Naive thymus-derived CD4-positive, alpha-beta T cell (primary cell): ENCODE measurements at regions of chr14 and their contacts with region 1.

Region 1: DNA sequence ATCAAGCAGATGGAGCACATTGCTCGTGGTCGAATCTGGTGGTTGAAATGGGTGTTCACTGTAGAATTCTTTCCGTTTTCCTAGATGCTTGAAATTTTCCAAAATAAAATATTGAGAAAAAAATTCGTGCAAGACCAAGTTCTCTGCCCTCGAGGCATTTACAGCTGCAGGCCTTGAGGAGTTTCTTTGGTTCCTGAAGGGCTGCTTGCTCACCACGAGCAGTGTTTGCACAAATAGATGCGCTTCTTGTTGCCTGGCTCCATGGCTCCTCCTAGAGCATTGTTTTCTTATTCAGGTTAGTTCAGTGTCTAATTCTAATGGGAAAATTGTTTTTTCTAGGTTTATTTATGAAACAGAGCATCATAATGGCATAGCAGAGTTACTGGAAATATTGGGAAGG is 74.5 kb upstream of the DYNC1H1 start:
- DNase-seq: peak in 3 of 9 donors; percentile 12 to 26 (median 16)
- ATAC-seq: no peak
- H3K4me3 ChIP-seq: no peak overlapping the region
- H3K4me3 Mint-ChIP-seq: no peak overlapping the region
- H3K27ac ChIP-seq: no peak overlapping the region
- H3K27ac Mint-ChIP-seq: peak overlapping the region in 7 of 9 donors; percentile 7 to 68 (median 54)
- H3K4me1 ChIP-seq: no peaks in the 10 kb centered on the region
- H3K4me1 Mint-ChIP-seq: peaks cover 0 to 5% (median 0%) of the 10 kb centered on the region in 7 donors
- H3K27me3 ChIP-seq: no peaks in the 10 kb centered on the region
- H3K27me3 Mint-ChIP-seq: no peaks in the 10 kb centered on the region

Region 2: GRCh38 chr14:101774006-101774795 is 115.7 kb before region 1 on chr14:
- CTCF ChIA-PET with region 1: interaction called, 5 read pairs
- POLR2A ChIA-PET with region 1: no interaction called
- intact Hi-C with region 1: loop called in 1 of 2 experiments (anchors 5 kb)
- DNase-seq: no peak
- ATAC-seq: no peak
- H3K4me3 ChIP-seq: no peak overlapping the region
- H3K4me3 Mint-ChIP-seq: no peak overlapping the region
- H3K27ac ChIP-seq: no peak overlapping the region
- H3K27ac Mint-ChIP-seq: peak overlapping the region in 6 of 9 donors; percentile 14 to 70 (median 28)
- H3K4me1 ChIP-seq: no peaks in the 10 kb centered on the region
- H3K4me1 Mint-ChIP-seq: peaks cover 18 to 41% (median 35%) of the 10 kb centered on the region in 7 donors
- H3K27me3 ChIP-seq: no peaks in the 10 kb centered on the region
- H3K27me3 Mint-ChIP-seq: peaks cover 0 to 8% (median 0%) of the 10 kb centered on the region in 5 donors